Tibial artery (tissue), 4 donors: ENCODE measurements at regions of chr18 and their contacts with region 1.

Region 1: GRCh38 chr18:9614401-9615279 is at the start of gene PPP4R1:
- DNase-seq: peak; percentile 81 to 89
- H3K4me3 ChIP-seq: peak within 1 kb of the TSS; percentile 96 to 98
- H3K27ac ChIP-seq: peak within 1 kb of the TSS; percentile 94 to 99
- H3K4me1 ChIP-seq: peaks cover 0 to 53% (median 21%) of the 10 kb centered on the region in 4 donors
- H3K27me3 ChIP-seq: no peaks in the 10 kb centered on the region
- CTCF ChIP-seq: no peak

Region 2: DNA sequence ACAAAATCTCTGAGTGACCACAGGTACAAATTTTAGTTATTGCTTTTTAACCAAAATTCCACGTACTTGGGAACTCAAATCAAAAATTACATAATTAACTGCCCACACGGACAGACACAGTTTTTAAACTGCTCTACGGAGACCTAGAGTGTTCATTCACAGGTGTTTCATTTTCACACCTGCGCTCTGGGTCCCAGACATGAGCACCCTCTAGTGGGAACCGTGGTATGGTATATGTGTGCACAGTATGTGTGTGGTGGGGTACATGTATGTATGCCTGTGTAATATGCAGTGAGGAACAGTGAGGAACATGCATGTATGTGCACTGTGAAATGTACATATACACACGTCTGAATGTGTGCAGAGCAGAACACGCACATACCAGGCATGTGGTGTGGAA is 65.2 kb before region 1 on chr18:
- intact Hi-C with region 1: no loop called
- DNase-seq: no peak
- H3K4me3 ChIP-seq: no peak overlapping the region
- H3K27ac ChIP-seq: no peak overlapping the region
- H3K4me1 ChIP-seq: no peaks in the 10 kb centered on the region
- H3K27me3 ChIP-seq: no peaks in the 10 kb centered on the region
- CTCF ChIP-seq: no peak

Region 3: GRCh38 chr18:9673296-9674251 is 58.9 kb after region 1 on chr18:
- intact Hi-C with region 1: loop called (anchors 5 kb)
- DNase-seq: peak in 1 of 2 donors; percentile 26
- H3K4me3 ChIP-seq: no peak overlapping the region
- H3K27ac ChIP-seq: no peak overlapping the region
- H3K4me1 ChIP-seq: peaks cover 0 to 16% (median 5%) of the 10 kb centered on the region in 4 donors
- H3K27me3 ChIP-seq: no peaks in the 10 kb centered on the region
- CTCF ChIP-seq: peak in 1 of 2 experiments; percentile 17

Region 4: DNA sequence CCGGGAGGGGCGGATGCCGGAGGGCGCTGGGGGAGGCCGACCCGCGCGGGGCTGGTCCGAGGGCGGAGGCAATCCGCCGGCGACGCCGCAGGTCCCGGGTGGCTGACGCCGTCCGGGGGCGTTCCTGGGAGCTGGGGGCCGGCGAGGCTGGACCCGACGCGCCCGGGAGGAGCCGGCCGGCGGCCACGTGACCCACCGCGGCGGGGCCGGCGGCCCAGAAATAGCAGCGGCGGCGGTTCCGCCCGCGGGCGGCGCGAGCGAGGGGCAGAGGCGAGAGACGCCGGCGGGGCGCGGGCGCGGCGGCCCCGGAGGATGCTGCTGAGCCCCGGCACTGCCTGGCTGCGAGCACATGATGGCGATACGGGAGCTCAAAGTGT is 93.4 kb after region 1 on chr18 and contains the start of gene RAB31:
- intact Hi-C with region 1: loop called (anchors 10 kb)
- DNase-seq: peak; percentile 81 to 95
- H3K4me3 ChIP-seq: peak within 1 kb of the TSS; percentile 94 to 99
- H3K27ac ChIP-seq: peak within 1 kb of the TSS; percentile 93 to 98
- H3K4me1 ChIP-seq: peaks cover 0 to 69% (median 32%) of the 10 kb centered on the region in 4 donors
- H3K27me3 ChIP-seq: no peaks in the 10 kb centered on the region
- CTCF ChIP-seq: no peak

Region 5: GRCh38 chr18:9971313-9971920 is 356.8 kb after region 1 on chr18:
- intact Hi-C with region 1: no loop called
- DNase-seq: peak; percentile 74 to 83
- H3K4me3 ChIP-seq: no peak overlapping the region
- H3K27ac ChIP-seq: no peak overlapping the region
- H3K4me1 ChIP-seq: no peaks in the 10 kb centered on the region
- H3K27me3 ChIP-seq: peaks cover 0 to 2% of the 10 kb centered on the region in 2 donors
- CTCF ChIP-seq: peak; percentile 69 to 89